ENCODE measurements at regions of chr17 and their contacts with region 1.

Region 1: DNA sequence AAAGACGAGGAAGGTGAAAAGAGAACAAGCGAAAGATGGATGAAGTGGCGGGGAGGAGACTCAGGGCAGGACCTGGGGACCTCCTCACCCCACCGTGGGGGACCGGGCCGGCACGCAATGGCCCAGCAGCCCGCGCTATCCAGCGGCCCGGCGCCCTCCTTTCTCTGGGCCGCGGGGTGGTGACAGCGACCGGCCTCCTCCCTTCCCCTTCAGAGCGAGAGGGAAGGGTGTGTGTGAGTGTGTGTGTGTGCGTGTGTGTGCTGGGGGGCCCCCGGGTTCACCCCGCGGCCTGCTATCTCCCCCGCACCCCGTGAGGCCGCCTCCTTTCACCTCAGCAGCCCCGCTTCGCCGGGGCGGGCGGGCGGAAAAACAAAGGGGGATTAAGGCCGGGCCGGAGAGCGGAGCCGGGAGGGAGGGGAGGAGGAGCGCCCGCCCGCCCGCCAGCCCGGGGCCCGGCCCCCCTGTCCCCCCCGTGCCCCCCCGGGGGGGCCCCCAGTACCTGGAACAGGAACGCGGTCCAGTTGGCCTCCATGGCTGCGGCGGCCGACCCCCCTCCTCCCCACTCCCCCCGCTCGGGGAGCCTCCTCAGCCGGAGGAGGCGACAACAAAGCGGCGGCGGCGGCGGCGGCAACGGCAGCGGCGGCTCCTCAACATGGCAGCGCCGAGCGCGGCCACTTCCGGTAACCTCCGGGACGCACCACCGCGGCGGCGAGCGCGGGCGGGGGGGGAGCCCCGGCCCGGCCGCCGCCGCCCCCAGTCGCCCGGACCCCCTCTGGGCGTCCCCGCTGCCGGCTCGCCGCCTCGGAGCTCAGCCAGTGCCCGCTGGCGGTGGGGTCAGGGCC is at the start of gene VEZF1:
- DNase-seq: peak; percentile 73
- H3K4me3 ChIP-seq: peak within 1 kb of the TSS; percentile 86
- H3K27ac ChIP-seq: peak within 1 kb of the TSS; percentile 96
- H3K4me1 ChIP-seq: peaks cover 7% of the 10 kb centered on the region
- H3K27me3 ChIP-seq: no peaks in the 10 kb centered on the region
- CTCF ChIP-seq: no peak
- total RNA-seq, gene VEZF1: 35.7 to 52.8 TPM

Region 2: GRCh38 chr17:57955183-57955931 is 32.4 kb before region 1 on chr17 and contains the start of gene CUEDC1:
- intact Hi-C with region 1: loop called (anchors 5 kb)
- DNase-seq: peak; percentile 78
- H3K4me3 ChIP-seq: peak within 1 kb of the TSS; percentile 74
- H3K27ac ChIP-seq: peak within 1 kb of the TSS; percentile 82
- H3K4me1 ChIP-seq: peaks cover 8% of the 10 kb centered on the region
- H3K27me3 ChIP-seq: no peaks in the 10 kb centered on the region
- CTCF ChIP-seq: no peak
- total RNA-seq, gene CUEDC1: 14.7 to 15.2 TPM

Region 3: GRCh38 chr17:58352014-58352842 is 364.4 kb after region 1 on chr17 and contains the start of gene SUPT4H1:
- intact Hi-C with region 1: no loop called
- DNase-seq: peak; percentile 94
- H3K4me3 ChIP-seq: peak within 1 kb of the TSS; percentile 89
- H3K27ac ChIP-seq: peak within 1 kb of the TSS; percentile 96
- H3K4me1 ChIP-seq: no peaks in the 10 kb centered on the region
- H3K27me3 ChIP-seq: no peaks in the 10 kb centered on the region
- CTCF ChIP-seq: no peak
- total RNA-seq, gene SUPT4H1: 68.7 to 75.3 TPM

Measured in colonic mucosa (tissue), 4 donors.